CD8-positive, alpha-beta T cell (primary cell): ENCODE measurements at regions of chr18 and their contacts with region 1.

Region 1: GRCh38 chr18:49858309-49859020 is 45.1 kb upstream of the ACAA2 start:
- DNase-seq: peak; percentile 13 to 71 (median 62)
- ATAC-seq: no peak
- H3K4me3 ChIP-seq: no peak overlapping the region
- H3K4me3 Mint-ChIP-seq: no peak overlapping the region
- H3K27ac ChIP-seq: no peak overlapping the region
- H3K27ac Mint-ChIP-seq: no peak overlapping the region
- H3K4me1 ChIP-seq: no peaks in the 10 kb centered on the region
- H3K4me1 Mint-ChIP-seq: no peaks in the 10 kb centered on the region
- H3K27me3 ChIP-seq: no peaks in the 10 kb centered on the region
- H3K27me3 Mint-ChIP-seq: peaks cover 2% of the 10 kb centered on the region
- CTCF ChIP-seq: peak; percentile 81

Region 2: DNA sequence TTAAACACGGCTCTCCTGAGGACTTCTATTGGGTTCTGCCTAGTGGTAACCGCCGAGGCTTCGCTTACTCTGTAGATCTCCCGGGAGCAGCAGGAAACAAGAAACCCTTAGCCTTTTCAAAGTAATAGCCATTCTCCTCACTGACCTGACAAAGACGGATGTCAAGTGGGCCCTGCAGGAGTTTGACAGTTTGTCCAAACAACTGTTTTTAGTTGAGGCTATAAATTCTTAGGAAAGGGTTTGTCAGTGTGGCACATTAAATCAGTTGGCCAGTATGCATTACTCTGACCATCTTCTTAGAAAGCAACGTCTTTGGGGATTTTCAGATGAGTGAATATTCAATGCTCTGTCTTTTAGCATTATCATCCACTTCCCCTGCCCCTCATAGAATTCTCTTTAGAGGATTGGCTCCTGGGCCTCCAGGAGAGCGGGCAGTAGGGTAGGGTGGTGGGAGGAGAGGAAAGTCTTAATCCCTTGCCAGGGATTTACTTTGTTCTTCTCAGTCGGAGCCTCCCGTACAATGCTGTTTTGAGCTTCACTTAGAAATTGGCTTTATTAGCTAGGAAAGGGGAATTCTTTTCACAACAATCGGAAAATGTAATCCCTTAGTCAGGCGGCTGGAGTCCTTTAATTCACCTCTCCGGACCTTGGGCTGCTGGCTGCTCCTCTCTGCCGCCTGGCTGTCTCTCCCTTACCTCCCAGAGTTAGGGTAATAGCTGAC is 358.1 kb before region 1 on chr18:
- CTCF ChIA-PET with region 1: interaction called, 18 read pairs
- POLR2A ChIA-PET with region 1: no interaction called
- intact Hi-C with region 1: no loop called
- DNase-seq: no peak
- ATAC-seq: no peak
- H3K4me3 ChIP-seq: no peak overlapping the region
- H3K4me3 Mint-ChIP-seq: no peak overlapping the region
- H3K27ac ChIP-seq: no peak overlapping the region
- H3K27ac Mint-ChIP-seq: no peak overlapping the region
- H3K4me1 ChIP-seq: no peaks in the 10 kb centered on the region
- H3K4me1 Mint-ChIP-seq: no peaks in the 10 kb centered on the region
- H3K27me3 ChIP-seq: peaks cover 0 to 2% of the 10 kb centered on the region in 2 experiments
- H3K27me3 Mint-ChIP-seq: peaks cover 18% of the 10 kb centered on the region
- CTCF ChIP-seq: no peak

Region 3: DNA sequence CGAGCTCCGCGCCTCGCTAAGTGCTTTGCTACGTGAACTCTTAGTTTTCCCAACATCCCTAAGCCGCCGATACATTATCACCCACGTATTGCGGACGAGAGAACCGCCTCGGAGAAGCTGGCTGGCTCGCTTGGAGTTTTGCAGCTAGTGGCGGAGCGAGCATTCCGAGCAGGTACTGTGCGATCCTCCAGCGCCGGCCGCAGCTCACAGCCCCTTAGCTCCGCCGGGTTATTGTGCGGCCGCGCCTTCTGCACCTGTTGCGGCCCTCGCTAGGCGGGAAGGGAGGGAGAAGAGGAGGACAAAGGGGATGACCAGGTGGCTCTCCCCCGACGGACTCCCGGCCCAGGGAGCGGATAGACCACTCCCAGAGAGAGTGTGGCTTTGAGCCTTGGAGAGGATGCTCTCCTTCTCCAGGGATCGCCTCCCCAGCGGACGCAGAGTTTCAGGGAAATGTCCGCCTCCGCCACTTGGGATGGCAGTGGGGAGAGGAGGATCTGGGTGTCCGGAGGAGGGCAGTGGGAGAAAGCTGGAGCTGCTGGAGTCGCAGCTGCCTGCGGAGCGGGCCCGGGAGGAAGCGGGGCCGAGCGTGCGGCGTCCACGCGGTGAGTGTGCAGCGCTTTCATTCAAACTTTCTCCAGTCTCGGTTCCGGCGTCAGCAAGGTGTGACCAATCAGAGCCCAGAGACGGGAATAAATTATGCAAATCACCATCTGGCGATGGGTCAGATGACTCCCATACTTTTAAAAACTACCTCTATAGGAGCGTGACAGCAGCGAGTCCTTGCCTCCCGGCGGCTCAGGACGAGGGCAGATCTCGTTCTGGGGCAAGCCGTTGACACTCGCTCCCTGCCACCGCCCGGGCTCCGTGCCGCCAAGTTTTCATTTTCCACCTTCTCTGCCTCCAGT is 296.9 kb before region 1 on chr18 and contains the start of gene LIPG:
- CTCF ChIA-PET with region 1: interaction called, 62 read pairs
- POLR2A ChIA-PET with region 1: no interaction called
- intact Hi-C with region 1: loop called (anchors 1 kb)
- DNase-seq: peak in 4 of 9 experiments; percentile 18 to 67 (median 40)
- ATAC-seq: peak; percentile 75
- H3K4me3 ChIP-seq: peak within 1 kb of the TSS; percentile 38 to 62
- H3K4me3 Mint-ChIP-seq: peak within 1 kb of the TSS; percentile 75
- H3K27ac ChIP-seq: no peak within 1 kb of the TSS
- H3K27ac Mint-ChIP-seq: no peak within 1 kb of the TSS
- H3K4me1 ChIP-seq: peaks cover 21% of the 10 kb centered on the region
- H3K4me1 Mint-ChIP-seq: peaks cover 30% of the 10 kb centered on the region
- H3K27me3 ChIP-seq: peaks cover 23 to 37% of the 10 kb centered on the region in 2 experiments
- H3K27me3 Mint-ChIP-seq: peaks cover 64% of the 10 kb centered on the region
- CTCF ChIP-seq: no peak
- total RNA-seq, gene LIPG: not detected

Region 4: DNA sequence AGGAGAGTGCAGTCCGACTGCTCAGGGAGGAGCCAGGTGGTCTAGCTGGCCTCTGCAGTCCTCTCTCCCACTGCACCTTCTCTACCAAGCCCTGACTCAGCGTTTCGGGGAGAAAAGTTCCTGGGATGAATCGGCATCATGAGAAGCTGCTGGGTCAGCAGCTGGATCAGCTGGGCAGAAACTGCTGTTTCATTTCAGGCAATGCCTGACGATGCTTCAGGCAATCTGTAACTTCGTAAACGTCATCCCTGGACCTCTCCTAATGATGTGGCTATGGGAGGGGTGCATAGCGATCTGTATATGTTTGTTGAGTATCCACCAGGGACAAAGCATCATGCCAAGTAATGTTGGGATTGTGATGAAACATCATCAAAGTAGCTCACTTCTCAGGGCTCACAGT is 275.9 kb before region 1 on chr18:
- CTCF ChIA-PET with region 1: no interaction called
- POLR2A ChIA-PET with region 1: no interaction called
- intact Hi-C with region 1: no loop called
- DNase-seq: no peak
- ATAC-seq: no peak
- H3K4me3 ChIP-seq: no peak overlapping the region
- H3K4me3 Mint-ChIP-seq: no peak overlapping the region
- H3K27ac ChIP-seq: no peak overlapping the region
- H3K27ac Mint-ChIP-seq: no peak overlapping the region
- H3K4me1 ChIP-seq: no peaks in the 10 kb centered on the region
- H3K4me1 Mint-ChIP-seq: no peaks in the 10 kb centered on the region
- H3K27me3 ChIP-seq: no peaks in the 10 kb centered on the region
- H3K27me3 Mint-ChIP-seq: peaks cover 18% of the 10 kb centered on the region
- CTCF ChIP-seq: no peak

Region 5: DNA sequence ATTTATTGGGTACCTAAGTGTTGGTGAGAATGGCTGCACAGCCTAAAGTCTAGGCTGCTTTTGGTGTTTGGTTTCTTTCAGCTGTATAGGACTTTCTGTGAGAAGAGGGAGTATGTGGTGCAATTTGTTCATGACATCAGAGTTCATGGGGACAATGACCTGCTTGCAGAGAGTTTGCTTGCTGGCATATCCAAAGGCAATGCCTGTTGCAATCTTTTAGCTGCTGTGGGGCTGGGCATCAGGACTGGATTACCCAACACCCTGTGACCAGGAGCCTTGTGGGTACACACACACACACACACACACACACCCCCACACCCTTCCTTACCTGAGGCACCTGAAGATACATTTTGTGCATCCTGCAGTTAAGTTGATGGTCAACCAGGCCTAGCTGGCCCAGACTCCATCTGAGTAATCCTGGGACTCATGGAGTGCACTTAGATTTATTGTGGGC is 228.2 kb before region 1 on chr18:
- CTCF ChIA-PET with region 1: interaction called, 4 read pairs
- POLR2A ChIA-PET with region 1: no interaction called
- intact Hi-C with region 1: loop called in 1 of 2 experiments (anchors 10 kb)
- DNase-seq: no peak
- ATAC-seq: no peak
- H3K4me3 ChIP-seq: no peak overlapping the region
- H3K4me3 Mint-ChIP-seq: no peak overlapping the region
- H3K27ac ChIP-seq: no peak overlapping the region
- H3K27ac Mint-ChIP-seq: no peak overlapping the region
- H3K4me1 ChIP-seq: no peaks in the 10 kb centered on the region
- H3K4me1 Mint-ChIP-seq: no peaks in the 10 kb centered on the region
- H3K27me3 ChIP-seq: no peaks in the 10 kb centered on the region
- H3K27me3 Mint-ChIP-seq: peaks cover 5% of the 10 kb centered on the region
- CTCF ChIP-seq: no peak

Region 6: DNA sequence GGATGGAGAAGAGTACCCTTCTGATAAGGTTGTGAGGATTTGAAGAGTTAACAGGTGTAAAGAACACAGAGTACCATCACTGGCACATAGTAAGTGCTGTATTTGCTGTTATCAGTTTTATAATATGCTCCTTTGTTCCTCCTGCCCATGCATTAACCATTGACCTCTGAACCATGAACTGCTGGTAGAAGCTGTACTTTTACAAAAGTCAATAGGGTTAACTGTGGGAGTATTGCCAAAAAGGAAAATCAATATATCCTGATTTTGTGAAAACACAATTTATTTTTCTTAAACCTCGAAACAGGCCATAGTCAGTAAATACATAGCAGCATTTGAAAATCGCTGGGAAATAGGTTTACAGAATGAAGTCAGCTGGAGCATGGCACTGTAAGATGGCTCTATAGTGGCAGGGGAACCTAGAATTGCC is 26.2 kb before region 1 on chr18:
- CTCF ChIA-PET with region 1: no interaction called
- POLR2A ChIA-PET with region 1: no interaction called
- intact Hi-C with region 1: no loop called
- DNase-seq: no peak
- ATAC-seq: no peak
- H3K4me3 ChIP-seq: no peak overlapping the region
- H3K4me3 Mint-ChIP-seq: no peak overlapping the region
- H3K27ac ChIP-seq: no peak overlapping the region
- H3K27ac Mint-ChIP-seq: no peak overlapping the region
- H3K4me1 ChIP-seq: no peaks in the 10 kb centered on the region
- H3K4me1 Mint-ChIP-seq: no peaks in the 10 kb centered on the region
- H3K27me3 ChIP-seq: no peaks in the 10 kb centered on the region
- H3K27me3 Mint-ChIP-seq: no peaks in the 10 kb centered on the region
- CTCF ChIP-seq: no peak